Activated T-helper 1 cell treated with anti-CD3 and anti-CD28 coated beads, Interleukin-12 subunit alpha, Interleukin-12 subunit beta, Interleukin-2, Interleukin-4 antibody, amounts not matched to agents 30 ng/mL and 10 ng/mL and 1 ng/mL, durations not matched to agents 14 hours and 24 hours and 36 hours (primary cell): ENCODE measurements at regions of chr9 and their contacts with region 1.

Region 1: GRCh38 chr9:21624675-21625644 is 142.8 kb upstream of the IFNE start:
- DNase-seq: no peak
- H3K4me3 Mint-ChIP-seq: no peak overlapping the region
- H3K27ac Mint-ChIP-seq: peak overlapping the region; percentile 40
- H3K4me1 Mint-ChIP-seq: peaks cover 18% of the 10 kb centered on the region
- H3K27me3 Mint-ChIP-seq: peaks cover 7% of the 10 kb centered on the region

Region 2: DNA sequence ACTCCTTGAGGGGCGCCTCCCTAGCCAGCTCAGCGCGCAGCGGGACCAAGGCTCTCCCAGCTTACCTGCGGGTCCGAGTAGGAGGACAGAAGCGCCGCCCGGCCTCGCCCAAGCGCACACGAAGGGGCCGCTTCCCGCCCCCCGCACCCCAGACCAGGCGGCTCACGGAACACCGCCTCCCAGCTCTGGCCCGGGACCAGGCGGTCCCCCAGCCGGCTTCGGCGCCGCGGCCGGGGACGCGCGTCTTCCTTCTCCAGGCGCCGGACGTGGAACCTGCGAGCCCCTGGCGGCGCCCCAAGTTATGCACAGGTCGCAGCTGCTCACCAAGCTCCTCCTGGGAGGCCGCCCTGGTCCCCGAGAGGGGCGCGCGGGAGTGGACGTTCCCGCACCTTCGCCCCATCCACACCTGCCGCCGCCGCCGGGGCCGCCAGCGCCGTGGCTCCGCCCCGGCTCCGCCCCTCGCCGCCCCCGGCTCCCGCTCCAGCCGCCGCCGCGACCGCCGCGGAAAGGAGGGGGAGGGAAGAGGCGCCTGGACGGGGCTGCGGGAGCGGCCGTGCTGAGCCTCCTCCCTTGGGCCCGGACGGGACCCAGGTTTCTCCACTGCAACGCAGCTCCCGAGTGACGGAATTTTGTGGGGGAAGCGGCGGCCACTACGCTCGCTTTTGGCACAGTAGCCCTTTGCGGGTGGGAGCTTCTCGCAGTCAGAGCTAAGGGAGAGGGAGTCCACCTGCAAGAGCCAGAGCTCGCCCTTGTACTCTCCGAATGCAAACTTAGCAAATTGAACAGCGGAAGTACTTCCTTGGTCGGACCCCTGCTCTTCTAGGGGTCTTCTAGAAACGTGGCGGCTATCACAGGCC is 65.3 kb before region 1 on chr9:
- intact Hi-C with region 1: loop called (anchors 5 kb)
- DNase-seq: peak; percentile 16
- H3K4me3 Mint-ChIP-seq: peak overlapping the region; percentile 85
- H3K27ac Mint-ChIP-seq: no peak overlapping the region
- H3K4me1 Mint-ChIP-seq: peaks cover 17% of the 10 kb centered on the region
- H3K27me3 Mint-ChIP-seq: peaks cover 56% of the 10 kb centered on the region

Region 3: GRCh38 chr9:21591221-21592062 is 33.5 kb before region 1 on chr9:
- intact Hi-C with region 1: loop called (anchors 2 kb)
- DNase-seq: peak; percentile 24
- H3K4me3 Mint-ChIP-seq: no peak overlapping the region
- H3K27ac Mint-ChIP-seq: peak overlapping the region; percentile 40
- H3K4me1 Mint-ChIP-seq: peaks cover 14% of the 10 kb centered on the region
- H3K27me3 Mint-ChIP-seq: peaks cover 7% of the 10 kb centered on the region

Region 4: DNA sequence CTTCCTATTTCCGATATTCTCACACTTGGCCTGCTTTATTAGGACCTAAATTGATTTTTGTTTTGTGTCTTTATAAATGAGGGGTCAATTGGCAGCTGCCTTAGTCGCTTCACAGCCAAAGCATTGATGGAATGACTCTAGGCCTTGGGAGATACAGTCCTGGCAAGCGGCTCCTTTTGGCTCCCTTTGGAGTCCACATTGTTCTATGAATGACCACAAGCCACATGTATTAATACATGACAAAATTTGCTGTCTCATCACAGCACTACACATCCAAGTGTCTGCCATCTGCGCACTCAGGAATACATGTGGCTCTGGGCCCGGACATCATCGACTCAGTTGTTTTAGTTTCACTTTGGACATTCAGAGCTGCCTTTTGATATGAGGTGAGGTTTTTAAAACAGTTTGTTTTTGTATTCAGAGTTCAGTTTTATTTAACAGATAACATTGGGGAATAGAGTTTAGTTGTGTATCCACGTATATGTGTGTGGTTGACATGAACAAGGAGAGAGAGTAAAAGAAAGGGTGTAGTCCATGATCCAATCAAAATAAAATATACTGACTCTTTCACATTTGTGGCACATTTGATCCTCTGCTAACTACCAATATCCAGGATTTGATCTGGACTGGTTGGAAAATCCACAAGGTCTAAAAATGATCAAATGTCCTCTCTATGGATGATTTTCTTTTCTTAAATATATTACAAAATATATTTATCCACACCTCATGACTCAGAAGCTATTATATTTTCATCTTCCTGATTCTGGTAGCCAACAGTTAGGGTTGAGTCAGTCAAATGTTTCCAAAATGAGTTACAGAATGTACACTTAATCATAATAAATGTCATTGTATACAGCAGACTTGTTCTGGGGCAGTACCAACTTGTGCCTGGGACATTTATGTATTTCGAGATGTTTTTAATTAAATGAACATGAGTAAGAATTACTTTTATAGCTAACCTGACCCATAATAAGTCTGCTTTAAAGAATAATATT is 63.4 kb after region 1 on chr9:
- intact Hi-C with region 1: loop called (anchors 2 kb)
- DNase-seq: no peak
- H3K4me3 Mint-ChIP-seq: no peak overlapping the region
- H3K27ac Mint-ChIP-seq: no peak overlapping the region
- H3K4me1 Mint-ChIP-seq: peaks cover 41% of the 10 kb centered on the region
- H3K27me3 Mint-ChIP-seq: peaks cover 2% of the 10 kb centered on the region